AG04450 (cell line): ENCODE measurements at regions of chr1 and their contacts with region 1.

Region 1: GRCh38 chr1:151968058-151968457 is 25.6 kb downstream of the S100A10 start:
- DNase-seq: no peak
- H3K4me3 ChIP-seq: no peak overlapping the region
- H3K27ac ChIP-seq: no peak overlapping the region
- H3K27me3 ChIP-seq: no peaks in the 10 kb centered on the region
- CTCF ChIP-seq: peak; percentile 81

Region 2: DNA sequence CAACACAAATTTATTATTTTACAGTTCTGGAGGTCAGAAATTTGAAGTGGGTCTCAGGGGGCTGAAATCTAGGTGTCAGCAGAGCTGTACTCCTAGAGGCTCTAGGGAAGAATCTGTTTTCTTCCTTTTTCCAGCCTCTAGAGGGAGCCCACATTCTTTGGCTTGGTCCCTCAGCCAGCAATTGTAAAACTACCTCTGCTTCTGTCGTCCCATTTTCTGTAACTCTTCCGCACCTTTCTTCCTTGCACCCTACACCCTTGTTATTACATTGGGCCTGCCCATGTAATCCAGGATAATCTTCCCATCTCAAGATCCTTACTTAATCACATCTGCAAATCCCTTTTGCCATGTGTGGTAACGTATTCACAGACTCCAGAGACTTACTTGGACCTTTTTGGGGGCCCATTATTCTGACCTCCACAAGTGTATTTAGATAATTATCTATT is 34.0 kb before region 1 on chr1:
- CTCF ChIA-PET with region 1: interaction called, 12 read pairs
- POLR2A ChIA-PET with region 1: no interaction called
- DNase-seq: peak; percentile 16
- H3K4me3 ChIP-seq: no peak overlapping the region
- H3K27ac ChIP-seq: no peak overlapping the region
- H3K27me3 ChIP-seq: peaks cover 17% of the 10 kb centered on the region
- CTCF ChIP-seq: peak; percentile 94

Region 3: GRCh38 chr1:151953409-151954094 is 14.5 kb before region 1 on chr1:
- CTCF ChIA-PET with region 1: interaction called, 17 read pairs
- POLR2A ChIA-PET with region 1: no interaction called
- DNase-seq: no peak
- H3K4me3 ChIP-seq: no peak overlapping the region
- H3K27ac ChIP-seq: no peak overlapping the region
- H3K27me3 ChIP-seq: peaks cover 13% of the 10 kb centered on the region
- CTCF ChIP-seq: no peak

Region 4: GRCh38 chr1:151984313-151984956 is 16.4 kb after region 1 on chr1:
- CTCF ChIA-PET with region 1: interaction called, 40 read pairs
- POLR2A ChIA-PET with region 1: interaction called, 4 read pairs
- DNase-seq: no peak
- H3K4me3 ChIP-seq: no peak overlapping the region
- H3K27ac ChIP-seq: no peak overlapping the region
- H3K27me3 ChIP-seq: no peaks in the 10 kb centered on the region
- CTCF ChIP-seq: no peak

Region 5: DNA sequence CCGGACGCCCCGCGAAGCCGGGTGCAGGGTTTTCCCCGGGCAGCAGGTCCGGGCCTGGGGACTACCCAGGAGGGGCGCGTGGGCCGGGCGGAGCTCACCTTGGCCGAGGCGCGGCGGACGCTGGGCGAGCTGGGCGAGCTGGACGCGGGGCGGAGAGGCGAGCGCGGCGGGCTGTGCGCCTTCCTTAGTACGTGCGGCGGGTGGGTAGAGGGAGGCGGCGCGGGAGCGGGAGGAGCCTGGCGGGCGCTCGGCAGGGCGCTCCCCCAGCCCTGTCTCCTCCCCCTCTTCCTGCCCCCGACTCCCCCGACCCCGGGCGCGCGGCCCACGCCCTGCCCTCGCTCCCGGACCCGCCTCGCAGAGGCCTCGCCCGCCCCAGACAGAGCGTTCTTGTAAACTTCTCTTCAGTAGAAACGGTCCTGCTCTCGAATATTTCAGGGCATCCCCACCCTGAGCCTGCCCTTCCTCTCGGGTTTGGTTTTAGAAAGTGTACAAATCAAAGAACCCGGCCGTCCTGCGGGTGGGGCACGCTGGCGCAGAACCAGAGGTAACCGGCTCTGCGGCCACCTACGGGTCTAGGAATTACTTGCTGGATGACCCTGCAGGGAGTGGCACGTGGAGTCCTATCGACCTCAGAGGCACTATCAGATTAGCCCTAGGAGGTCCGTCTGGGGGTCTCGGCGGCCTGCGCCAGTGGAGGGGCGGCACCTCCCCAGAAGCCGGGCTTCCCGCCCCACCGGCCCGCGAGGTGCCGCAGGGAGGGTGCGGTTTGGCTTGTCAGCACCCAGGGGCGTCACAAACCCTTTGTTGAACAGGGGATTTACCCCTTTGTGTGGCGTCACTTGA is 25.8 kb after region 1 on chr1 and contains the start of gene S100A10:
- CTCF ChIA-PET with region 1: interaction called, 223 read pairs
- POLR2A ChIA-PET with region 1: interaction called, 4 read pairs
- DNase-seq: no peak
- H3K4me3 ChIP-seq: peak within 1 kb of the TSS; percentile 94
- H3K27ac ChIP-seq: peak within 1 kb of the TSS; percentile 61
- H3K27me3 ChIP-seq: no peaks in the 10 kb centered on the region
- CTCF ChIP-seq: no peak
- polyA plus RNA-seq, gene S100A10: 188 and 200 TPM in 2 replicates

Region 6: GRCh38 chr1:152013664-152014237 is 45.7 kb after region 1 on chr1:
- CTCF ChIA-PET with region 1: interaction called, 39 read pairs
- POLR2A ChIA-PET with region 1: no interaction called
- DNase-seq: no peak
- H3K4me3 ChIP-seq: no peak overlapping the region
- H3K27ac ChIP-seq: no peak overlapping the region
- H3K27me3 ChIP-seq: peaks cover 24% of the 10 kb centered on the region
- CTCF ChIP-seq: peak; percentile 76

Region 7: DNA sequence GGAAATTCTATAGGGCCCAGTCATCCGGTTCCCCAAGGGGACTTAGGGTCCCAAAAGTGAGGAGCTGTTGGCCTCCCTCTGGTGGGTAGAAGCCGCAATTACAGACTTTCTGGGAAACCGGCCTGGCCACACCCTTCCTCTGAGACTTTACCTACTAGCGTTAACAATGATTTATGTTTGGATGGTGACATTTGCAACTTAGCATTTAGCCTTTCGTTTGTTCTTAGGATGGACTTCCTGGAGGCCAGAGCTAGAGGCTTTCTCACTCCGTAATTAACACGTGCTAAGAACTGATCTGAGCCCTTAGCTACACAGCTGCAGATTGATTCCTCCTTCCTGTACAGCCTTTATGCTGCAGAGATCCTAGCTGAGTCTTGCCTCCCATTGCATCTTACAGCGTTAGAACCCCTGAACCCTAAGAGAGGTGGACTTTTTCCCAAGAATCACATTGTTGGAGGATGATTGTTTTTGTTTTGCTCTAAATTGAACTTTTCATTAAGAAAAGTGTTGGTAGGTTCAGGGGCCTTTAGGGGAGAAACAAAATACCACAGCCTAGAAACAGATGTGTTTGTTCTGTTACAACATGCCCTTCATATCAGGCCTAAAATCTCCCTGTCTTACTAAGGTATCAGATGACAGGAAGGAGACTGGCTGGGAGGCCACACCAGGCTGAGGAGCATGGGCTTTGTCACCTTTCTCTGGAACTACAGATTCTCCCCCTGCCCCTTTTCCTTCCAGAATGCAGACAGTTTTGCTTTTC is 66.8 kb after region 1 on chr1:
- CTCF ChIA-PET with region 1: interaction called, 18 read pairs
- POLR2A ChIA-PET with region 1: no interaction called
- DNase-seq: no peak
- H3K4me3 ChIP-seq: peak overlapping the region; percentile 74
- H3K27ac ChIP-seq: peak overlapping the region; percentile 78
- H3K27me3 ChIP-seq: no peaks in the 10 kb centered on the region
- CTCF ChIP-seq: peak; percentile 71